ENCODE measurements at regions of chr12 and their contacts with region 1.

Region 1: DNA sequence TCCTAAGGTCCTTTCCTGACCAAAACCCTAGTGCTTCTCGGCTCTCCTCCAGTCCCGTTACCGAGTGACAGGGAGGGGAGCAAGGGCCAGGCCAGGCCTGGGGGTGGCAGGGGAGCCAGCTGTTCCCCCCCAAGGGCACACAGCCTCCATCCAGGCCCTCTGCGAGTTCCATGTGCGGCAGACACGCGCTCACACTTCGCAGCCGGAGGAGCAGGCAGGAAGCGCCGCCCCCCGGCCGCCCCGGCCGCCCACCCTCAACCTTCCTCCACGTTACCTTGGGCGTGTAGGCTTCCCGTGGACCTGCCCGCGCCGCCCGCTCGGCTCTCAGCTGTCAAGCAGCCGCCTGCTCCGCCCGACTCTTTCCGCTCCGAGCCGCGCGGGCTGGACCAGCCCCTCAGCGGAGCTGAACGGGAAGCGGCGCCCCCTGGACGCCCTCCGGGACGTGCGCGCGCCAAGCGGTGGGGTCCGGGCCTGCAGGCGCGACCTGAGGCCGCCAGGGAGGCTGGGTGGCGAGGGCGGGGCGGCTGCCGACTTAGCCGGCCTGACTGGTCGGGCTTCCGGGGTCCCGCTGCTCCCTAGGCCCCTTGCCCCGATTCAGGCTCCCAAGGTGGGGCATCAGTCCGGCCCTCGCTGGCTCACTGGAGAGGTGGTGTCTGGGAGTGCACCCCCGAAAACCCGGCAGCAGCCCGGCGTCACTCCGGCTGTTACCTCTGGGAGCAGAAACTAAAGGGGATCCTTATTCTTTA is at the start of gene CRACR2A:
- DNase-seq: peak; percentile 88
- H3K4me3 Mint-ChIP-seq: peak within 1 kb of the TSS; percentile 89
- H3K27ac Mint-ChIP-seq: peak within 1 kb of the TSS; percentile 97
- H3K4me1 Mint-ChIP-seq: peaks cover 57% of the 10 kb centered on the region
- H3K27me3 Mint-ChIP-seq: no peaks in the 10 kb centered on the region
- total RNA-seq, gene CRACR2A: 32.4 to 34.3 TPM

Region 2: DNA sequence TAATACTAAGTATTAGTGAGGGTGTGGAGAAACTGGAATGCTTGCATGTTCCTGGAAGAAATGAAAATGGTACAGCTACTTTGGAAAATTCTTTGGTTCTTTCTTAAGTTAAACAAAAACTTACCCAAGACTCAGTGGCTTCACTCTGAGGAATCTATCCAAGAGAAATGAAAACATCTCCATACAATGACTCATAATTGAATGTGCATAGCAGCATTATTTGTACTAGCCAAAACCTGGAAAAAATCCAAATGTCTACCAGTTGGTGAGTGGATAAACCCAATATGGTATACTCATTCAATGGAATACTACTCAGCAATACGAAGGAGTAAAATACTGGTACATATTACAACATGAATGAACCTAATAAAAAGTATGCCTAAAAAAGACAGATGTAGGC is 18.0 kb after region 1 on chr12:
- CTCF ChIA-PET with region 1: interaction called, 9 read pairs
- POLR2A ChIA-PET with region 1: interaction called, 10 read pairs
- DNase-seq: no peak
- H3K4me3 Mint-ChIP-seq: no peak overlapping the region
- H3K27ac Mint-ChIP-seq: no peak overlapping the region
- H3K4me1 Mint-ChIP-seq: peaks cover 12% of the 10 kb centered on the region
- H3K27me3 Mint-ChIP-seq: no peaks in the 10 kb centered on the region